Right ventricle myocardium inferior (tissue), 1 donor: ENCODE measurements at regions of chr15 and their contacts with region 1.

Region 1: DNA sequence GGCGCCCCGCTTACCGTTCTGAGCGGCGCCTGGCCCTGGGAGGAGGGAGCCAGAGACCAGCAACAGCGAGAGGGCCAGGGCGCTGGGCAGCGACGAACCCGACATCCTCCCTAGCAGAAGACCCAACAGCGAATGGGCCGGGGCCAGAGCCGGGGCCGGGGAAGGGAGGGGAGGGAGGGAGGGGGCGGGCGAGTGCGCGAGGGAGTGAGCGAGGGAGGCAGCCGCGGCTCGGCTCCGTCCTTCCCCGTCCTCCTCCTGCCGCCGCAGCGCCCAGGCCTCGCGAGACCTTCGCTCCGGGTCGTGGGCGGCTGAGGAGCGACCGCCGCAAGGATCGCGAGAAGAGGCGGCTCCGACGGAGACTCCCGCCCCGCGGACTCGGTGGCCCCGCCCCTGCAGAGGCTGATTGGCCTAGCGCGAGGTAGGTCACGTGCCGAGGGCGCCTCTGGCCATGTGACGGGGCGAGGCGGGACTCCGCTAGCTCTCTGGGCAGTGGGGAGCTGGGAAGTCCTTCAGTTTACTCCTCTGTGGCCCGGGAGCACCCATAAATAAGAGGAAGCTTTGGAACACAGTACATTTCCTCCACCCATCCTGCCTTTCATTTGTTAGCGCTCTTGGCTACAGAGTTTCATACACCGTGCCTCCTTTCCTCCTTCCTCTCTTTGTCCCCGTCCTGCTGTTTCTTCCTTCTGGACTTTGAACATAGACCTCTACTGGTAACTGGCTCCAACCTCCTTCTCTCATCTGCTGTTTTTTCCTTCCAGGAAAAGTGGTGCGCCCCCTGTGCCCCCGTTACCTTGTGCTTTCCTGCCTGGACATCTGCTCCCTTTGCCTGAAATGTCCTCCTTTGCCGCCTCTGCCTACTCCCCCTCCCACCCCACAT is at the start of gene NPTN:
- DNase-seq: peak; percentile 99
- ATAC-seq: peak; percentile 96
- total RNA-seq, gene NPTN: 211 TPM

Region 2: GRCh38 chr15:73240866-73241499 is 392.4 kb before region 1 on chr15:
- intact Hi-C with region 1: loop called (anchors 5 kb)
- DNase-seq: no peak
- ATAC-seq: no peak

Region 3: GRCh38 chr15:73346735-73347312 is 286.5 kb before region 1 on chr15:
- intact Hi-C with region 1: no loop called
- DNase-seq: no peak
- ATAC-seq: peak; percentile 61

Region 4: GRCh38 chr15:73368301-73369136 is 264.8 kb before region 1 on chr15 and contains the start of gene HCN4:
- intact Hi-C with region 1: loop called (anchors 10 kb)
- DNase-seq: no peak
- ATAC-seq: peak; percentile 77
- total RNA-seq, gene HCN4: 21.4 TPM

Region 5: GRCh38 chr15:73584699-73585420 is 48.5 kb before region 1 on chr15:
- intact Hi-C with region 1: no loop called
- DNase-seq: no peak
- ATAC-seq: no peak

Region 6: GRCh38 chr15:73599934-73600333 is 33.4 kb before region 1 on chr15:
- intact Hi-C with region 1: loop called (anchors 5 kb)
- DNase-seq: no peak
- ATAC-seq: no peak

Region 7: GRCh38 chr15:73697033-73697467 is 63.7 kb after region 1 on chr15:
- intact Hi-C with region 1: loop called (anchors 5 kb)
- DNase-seq: peak; percentile 91
- ATAC-seq: peak; percentile 93

Region 8: DNA sequence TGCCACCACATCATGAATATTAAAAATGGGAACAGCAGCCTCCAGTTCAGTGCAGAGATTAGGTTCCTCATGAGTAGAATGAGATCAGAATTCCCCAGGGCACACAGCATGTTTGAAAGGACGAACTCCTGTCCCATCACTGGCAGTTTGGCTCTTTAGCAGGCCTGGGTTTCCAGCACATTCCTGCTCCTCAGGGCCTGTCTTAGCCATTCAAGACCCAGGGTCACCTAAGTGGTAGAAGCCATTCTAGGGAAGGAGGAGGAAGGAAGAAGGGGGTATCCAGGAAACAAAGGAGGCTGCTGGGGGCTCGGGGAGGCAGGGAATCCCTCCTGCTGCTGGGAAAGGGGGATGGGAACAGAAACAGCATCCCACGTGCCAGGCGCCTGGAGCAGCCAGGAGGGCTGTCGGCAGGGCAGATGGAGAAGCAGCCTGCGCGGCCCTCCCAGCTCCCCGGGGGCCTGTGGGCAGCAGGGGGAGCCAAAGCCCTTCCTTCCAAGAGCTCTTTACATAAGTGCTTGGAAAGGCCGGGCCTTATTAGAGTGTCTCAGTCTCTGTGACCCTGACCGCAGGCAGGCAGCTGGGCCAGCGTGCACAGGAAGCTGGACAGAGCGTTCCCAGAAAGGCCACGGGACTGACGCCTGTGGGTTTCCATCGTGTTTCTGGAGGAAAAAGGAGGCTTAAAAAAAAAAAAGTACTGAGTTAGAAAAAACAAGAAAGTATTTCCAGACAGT is 317.6 kb after region 1 on chr15:
- intact Hi-C with region 1: no loop called
- DNase-seq: peak; percentile 95
- ATAC-seq: peak; percentile 97